ENCODE measurements at regions of chr17 and their contacts with region 1.

Region 1: GRCh38 chr17:35821308-35821707 is 12.0 kb downstream of the TAF15 start:
- DNase-seq: no peak
- ATAC-seq: no peak
- H3K4me3 ChIP-seq: no peak overlapping the region
- H3K27ac ChIP-seq: no peak overlapping the region
- H3K4me1 ChIP-seq: peaks cover 4% of the 10 kb centered on the region
- H3K27me3 ChIP-seq: no peaks in the 10 kb centered on the region
- CTCF ChIP-seq: no peak

Region 2: GRCh38 chr17:35764123-35764991 is 57.0 kb before region 1 on chr17:
- intact Hi-C with region 1: no loop called
- DNase-seq: peak; percentile 90 to 94
- ATAC-seq: peak; percentile 95 to 98 (median 96)
- H3K4me3 ChIP-seq: peak overlapping the region; percentile 73
- H3K27ac ChIP-seq: peak overlapping the region; percentile 41
- H3K4me1 ChIP-seq: peaks cover 6% of the 10 kb centered on the region
- H3K27me3 ChIP-seq: no peaks in the 10 kb centered on the region
- CTCF ChIP-seq: peak; percentile 97

Region 3: DNA sequence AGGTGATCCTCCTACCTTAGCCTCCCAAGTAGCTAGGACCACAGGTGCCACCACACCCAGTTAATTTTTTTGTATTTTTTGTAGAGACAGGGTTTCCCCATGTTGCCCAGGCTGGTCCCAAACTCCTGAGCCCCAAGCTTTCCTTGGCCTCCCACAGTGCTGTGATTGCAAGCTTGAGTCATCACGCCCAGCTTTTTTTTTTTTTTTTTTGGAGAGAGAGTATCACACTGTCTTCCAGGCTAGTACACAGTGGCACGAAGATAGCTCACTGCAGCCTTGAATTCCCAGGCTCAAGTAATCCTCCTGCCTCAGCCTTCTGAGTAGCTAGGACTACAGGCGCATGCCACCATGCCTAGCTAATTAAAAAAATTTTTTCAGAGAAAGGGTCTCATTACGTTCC is 20.2 kb after region 1 on chr17:
- intact Hi-C with region 1: loop called in 1 of 2 experiments (anchors 2 kb)
- DNase-seq: no peak
- ATAC-seq: peak in 2 of 4 donors; percentile 35 to 61
- H3K4me3 ChIP-seq: no peak overlapping the region
- H3K27ac ChIP-seq: no peak overlapping the region
- H3K4me1 ChIP-seq: no peaks in the 10 kb centered on the region
- H3K27me3 ChIP-seq: no peaks in the 10 kb centered on the region
- CTCF ChIP-seq: no peak

Measured in psoas muscle (tissue), 8 donors.